ENCODE measurements at regions of chr12 and their contacts with region 1.

Region 1: GRCh38 chr12:92928962-92929915 is at the start of gene EEA1:
- DNase-seq: peak; percentile 92
- H3K4me3 Mint-ChIP-seq: peak within 1 kb of the TSS; percentile 89
- H3K27ac Mint-ChIP-seq: peak within 1 kb of the TSS; percentile 96
- H3K4me1 Mint-ChIP-seq: peaks cover 31% of the 10 kb centered on the region
- H3K27me3 Mint-ChIP-seq: peaks cover 13% of the 10 kb centered on the region
- total RNA-seq, gene EEA1: 17.5 and 18.8 TPM in 2 replicates

Region 2: DNA sequence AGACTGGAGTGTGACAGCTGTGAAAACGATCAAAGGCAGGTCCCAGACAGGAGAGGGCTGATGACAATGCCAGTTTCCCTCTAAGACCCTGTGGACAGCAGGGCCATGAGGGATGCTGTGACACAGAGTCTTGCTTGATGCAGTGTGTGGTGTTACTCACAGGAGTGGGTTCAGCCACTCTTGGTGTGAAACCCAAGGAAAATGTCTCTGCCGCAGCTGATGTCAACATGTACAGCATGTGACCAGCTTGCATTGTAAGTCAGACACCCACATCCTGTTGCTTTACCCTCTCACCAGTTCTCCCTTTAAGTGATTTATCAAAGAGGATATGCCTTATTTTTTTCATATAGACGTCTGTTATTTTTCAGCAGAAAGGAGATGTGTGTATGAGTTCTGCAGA is 1052.2 kb before region 1 on chr12:
- intact Hi-C with region 1: loop called (anchors 5 kb)
- DNase-seq: peak; percentile 81
- H3K4me3 Mint-ChIP-seq: peak overlapping the region; percentile 66
- H3K27ac Mint-ChIP-seq: peak overlapping the region; percentile 95
- H3K4me1 Mint-ChIP-seq: peaks cover 66% of the 10 kb centered on the region
- H3K27me3 Mint-ChIP-seq: no peaks in the 10 kb centered on the region

Region 3: GRCh38 chr12:92505254-92506231 is 423.7 kb before region 1 on chr12:
- intact Hi-C with region 1: loop called (anchors 5 kb)
- DNase-seq: peak; percentile 13
- H3K4me3 Mint-ChIP-seq: peak overlapping the region; percentile 77
- H3K27ac Mint-ChIP-seq: peak overlapping the region; percentile 93
- H3K4me1 Mint-ChIP-seq: peaks cover 47% of the 10 kb centered on the region
- H3K27me3 Mint-ChIP-seq: no peaks in the 10 kb centered on the region

Region 4: DNA sequence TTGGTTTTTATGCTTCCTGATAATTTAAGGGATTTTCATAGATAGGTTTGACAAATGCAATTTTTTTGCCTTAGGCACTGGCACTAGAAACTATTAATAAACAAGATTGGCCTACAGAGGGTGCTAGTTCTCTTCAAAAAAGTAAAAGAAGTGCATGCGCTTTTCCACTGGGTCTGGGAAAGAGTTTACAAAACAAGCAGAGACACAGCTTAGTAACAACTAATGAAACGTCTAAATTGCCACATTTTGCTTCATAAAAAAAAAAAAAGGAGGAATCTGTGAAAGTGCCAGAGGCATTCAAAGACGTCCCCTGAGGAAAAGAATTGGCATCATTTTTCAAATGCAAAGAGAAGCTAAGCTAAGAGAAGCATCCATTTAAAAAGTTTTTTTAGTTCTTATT is 58.1 kb after region 1 on chr12:
- intact Hi-C with region 1: loop called (anchors 1 kb)
- DNase-seq: no peak
- H3K4me3 Mint-ChIP-seq: no peak overlapping the region
- H3K27ac Mint-ChIP-seq: peak overlapping the region; percentile 79
- H3K4me1 Mint-ChIP-seq: peaks cover 30% of the 10 kb centered on the region
- H3K27me3 Mint-ChIP-seq: no peaks in the 10 kb centered on the region

Region 5: DNA sequence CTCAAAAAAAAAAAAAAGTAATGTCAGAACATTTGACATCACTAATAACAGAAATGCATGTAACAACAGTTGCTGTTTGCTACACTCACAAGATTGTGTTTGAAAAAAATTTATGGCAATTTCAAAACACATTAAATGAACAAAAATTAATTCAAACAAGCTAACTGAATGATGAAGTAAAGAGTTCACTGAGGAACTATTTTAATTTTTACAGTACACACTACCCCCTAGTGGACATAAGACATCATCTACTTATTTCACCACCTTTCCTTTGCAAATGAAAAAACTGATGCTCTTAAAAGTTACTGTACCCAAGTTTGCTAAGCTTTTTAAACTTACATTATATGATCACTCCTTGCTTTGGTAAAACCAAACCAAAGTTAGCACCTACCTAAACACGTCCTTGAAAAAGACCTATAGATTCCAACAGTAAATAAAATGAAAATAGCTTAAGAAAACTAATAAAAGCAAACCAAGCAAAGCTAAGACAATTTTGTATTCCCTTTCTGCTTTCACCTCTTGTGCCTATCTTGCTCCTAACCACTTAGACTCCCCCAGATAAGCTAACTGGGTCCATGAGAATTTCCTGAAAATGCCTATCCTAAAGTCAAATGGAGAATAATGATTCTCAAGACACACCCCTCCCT is 490.3 kb after region 1 on chr12:
- intact Hi-C with region 1: loop called (anchors 5 kb)
- DNase-seq: no peak
- H3K4me3 Mint-ChIP-seq: no peak overlapping the region
- H3K27ac Mint-ChIP-seq: peak overlapping the region; percentile 3
- H3K4me1 Mint-ChIP-seq: peaks cover 73% of the 10 kb centered on the region
- H3K27me3 Mint-ChIP-seq: no peaks in the 10 kb centered on the region

Region 6: GRCh38 chr12:93785262-93786010 is 856.2 kb after region 1 on chr12:
- intact Hi-C with region 1: loop called (anchors 1 kb)
- DNase-seq: peak; percentile 53
- H3K4me3 Mint-ChIP-seq: peak overlapping the region; percentile 67
- H3K27ac Mint-ChIP-seq: peak overlapping the region; percentile 82
- H3K4me1 Mint-ChIP-seq: peaks cover 51% of the 10 kb centered on the region
- H3K27me3 Mint-ChIP-seq: no peaks in the 10 kb centered on the region

Measured in activated T-helper 1 cell treated with anti-CD3 and anti-CD28 coated beads, Interleukin-12 subunit alpha, Interleukin-12 subunit beta, Interleukin-2, Interleukin-4 antibody, amounts not matched to agents 30 ng/mL and 10 ng/mL and 1 ng/mL, durations not matched to agents 14 hours and 24 hours and 36 hours (primary cell).